CD8-positive, alpha-beta T cell (primary cell): ENCODE measurements at regions of chr19 and their contacts with region 1.

Region 1: GRCh38 chr19:33176670-33177416 is 17.3 kb upstream of the LRP3 start:
- DNase-seq: peak; percentile 91 to 100 (median 97)
- ATAC-seq: peak; percentile 74
- H3K4me3 ChIP-seq: peak overlapping the region; percentile 78 to 89
- H3K4me3 Mint-ChIP-seq: peak overlapping the region; percentile 95
- H3K27ac ChIP-seq: peak overlapping the region; percentile 83
- H3K27ac Mint-ChIP-seq: peak overlapping the region; percentile 98
- H3K4me1 ChIP-seq: peaks cover 16% of the 10 kb centered on the region
- H3K4me1 Mint-ChIP-seq: peaks cover 37% of the 10 kb centered on the region
- H3K27me3 ChIP-seq: no peaks in the 10 kb centered on the region
- H3K27me3 Mint-ChIP-seq: no peaks in the 10 kb centered on the region
- CTCF ChIP-seq: no peak

Region 2: DNA sequence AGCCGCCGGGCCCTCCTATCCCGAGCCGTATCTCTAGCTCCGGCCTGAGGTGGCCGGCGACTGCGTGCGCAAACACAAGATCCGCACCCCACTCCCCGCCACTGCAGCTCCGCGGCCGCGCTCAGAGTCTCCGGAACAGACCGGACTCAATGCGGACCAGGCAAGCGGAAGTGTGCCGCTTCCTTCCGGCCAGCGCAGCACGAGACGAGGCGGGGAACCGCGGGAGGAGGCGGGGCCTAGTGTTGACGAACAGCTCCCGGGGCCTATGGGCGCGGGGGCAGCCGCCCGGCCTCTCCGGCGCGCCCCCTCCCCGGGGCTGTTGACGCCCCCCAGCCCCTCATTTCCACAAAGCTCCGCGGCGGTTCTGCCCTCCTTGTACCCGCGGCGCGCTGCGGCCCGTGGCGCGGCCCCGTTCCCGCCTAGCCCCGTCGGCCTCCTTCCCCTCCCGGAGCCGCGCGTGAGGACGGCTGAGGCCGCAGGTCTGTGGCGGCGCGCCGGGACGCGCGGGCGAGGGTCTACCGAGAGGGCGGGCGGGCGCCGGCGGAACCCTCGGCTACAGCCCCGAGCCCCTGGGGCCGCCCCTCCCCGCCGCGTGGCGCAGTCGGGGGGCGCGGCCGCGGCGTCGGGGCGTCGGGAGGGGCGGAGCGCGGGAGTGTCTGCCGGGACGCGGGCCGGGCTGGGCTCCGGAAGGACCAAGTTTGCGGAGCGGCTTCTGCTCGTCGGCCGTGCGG is 771.2 kb before region 1 on chr19 and contains the start of gene DPY19L3:
- CTCF ChIA-PET with region 1: no interaction called
- POLR2A ChIA-PET with region 1: interaction called, 5 read pairs
- intact Hi-C with region 1: loop called (anchors 2 kb)
- DNase-seq: peak; percentile 73 to 93 (median 89)
- ATAC-seq: peak; percentile 88
- H3K4me3 ChIP-seq: peak within 1 kb of the TSS; percentile 73 to 79
- H3K4me3 Mint-ChIP-seq: peak within 1 kb of the TSS; percentile 90
- H3K27ac ChIP-seq: peak within 1 kb of the TSS; percentile 87 to 91
- H3K27ac Mint-ChIP-seq: peak within 1 kb of the TSS; percentile 92
- H3K4me1 ChIP-seq: peaks cover 14% of the 10 kb centered on the region
- H3K4me1 Mint-ChIP-seq: peaks cover 22% of the 10 kb centered on the region
- H3K27me3 ChIP-seq: no peaks in the 10 kb centered on the region
- H3K27me3 Mint-ChIP-seq: no peaks in the 10 kb centered on the region
- CTCF ChIP-seq: no peak
- total RNA-seq, gene DPY19L3: 7.9 TPM

Region 3: DNA sequence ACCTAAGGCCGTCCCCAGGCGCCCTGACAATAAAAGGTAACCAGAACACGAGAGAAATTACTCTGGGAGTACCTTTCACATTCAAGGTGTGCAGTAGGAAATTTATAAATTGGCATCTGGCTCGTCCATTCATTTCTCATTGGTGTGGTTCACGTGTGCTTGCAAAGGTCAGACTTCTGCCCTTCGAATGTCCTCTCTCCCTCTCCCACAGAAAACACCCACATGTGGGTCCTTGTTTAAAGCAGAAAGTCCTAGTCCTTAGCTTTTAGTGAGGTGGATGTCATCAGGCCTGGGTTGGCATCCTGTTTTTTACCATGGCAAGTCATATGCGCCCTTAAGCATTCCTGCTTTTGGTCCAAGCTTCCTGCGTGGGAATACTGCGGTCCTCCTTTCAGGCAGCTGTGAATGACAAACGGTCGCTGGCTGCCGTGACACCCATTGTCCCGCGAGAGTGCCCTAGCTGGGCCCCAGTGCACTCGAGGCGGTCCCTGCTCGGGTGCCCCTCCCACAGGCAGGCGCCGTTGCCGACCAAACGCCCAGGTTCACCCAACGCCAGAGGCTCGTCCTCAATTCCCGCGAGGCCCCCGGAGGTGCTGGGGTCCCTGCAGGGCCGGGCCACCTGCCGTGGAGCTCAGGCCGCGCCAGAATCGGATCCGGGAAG is 485.4 kb before region 1 on chr19 and contains the start of gene NUDT19:
- CTCF ChIA-PET with region 1: no interaction called
- POLR2A ChIA-PET with region 1: no interaction called
- intact Hi-C with region 1: loop called in 1 of 2 experiments (anchors 5 kb)
- DNase-seq: peak; percentile 53 to 85 (median 75)
- ATAC-seq: peak; percentile 79
- H3K4me3 ChIP-seq: peak within 1 kb of the TSS; percentile 60 to 79
- H3K4me3 Mint-ChIP-seq: peak within 1 kb of the TSS; percentile 92
- H3K27ac ChIP-seq: peak within 1 kb of the TSS; percentile 35 to 74
- H3K27ac Mint-ChIP-seq: peak within 1 kb of the TSS; percentile 90
- H3K4me1 ChIP-seq: peaks cover 35% of the 10 kb centered on the region
- H3K4me1 Mint-ChIP-seq: peaks cover 52% of the 10 kb centered on the region
- H3K27me3 ChIP-seq: no peaks in the 10 kb centered on the region
- H3K27me3 Mint-ChIP-seq: no peaks in the 10 kb centered on the region
- CTCF ChIP-seq: no peak
- total RNA-seq, gene NUDT19: 15.3 to 18.0 TPM

Region 4: DNA sequence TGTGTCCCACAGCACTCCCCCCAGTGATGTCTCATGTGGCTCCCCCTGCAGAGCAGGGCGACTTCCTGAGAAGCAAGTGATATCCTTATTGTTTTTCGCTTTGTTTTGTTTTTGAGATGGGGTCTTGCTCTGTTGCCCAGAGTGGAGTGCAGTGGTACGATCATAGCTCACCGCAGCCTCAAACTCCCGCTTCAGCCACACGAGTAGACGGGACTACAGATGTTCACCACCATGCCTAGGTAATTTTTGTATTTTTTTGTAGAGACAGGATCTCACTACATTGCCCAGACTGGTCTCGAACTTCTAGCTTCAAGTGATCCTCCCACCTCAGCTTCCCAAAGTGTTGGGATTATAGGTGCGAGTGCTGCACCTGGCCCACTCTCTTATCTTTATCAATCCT is 210.1 kb before region 1 on chr19:
- CTCF ChIA-PET with region 1: no interaction called
- POLR2A ChIA-PET with region 1: no interaction called
- intact Hi-C with region 1: no loop called
- DNase-seq: no peak
- ATAC-seq: no peak
- H3K4me3 ChIP-seq: no peak overlapping the region
- H3K4me3 Mint-ChIP-seq: no peak overlapping the region
- H3K27ac ChIP-seq: no peak overlapping the region
- H3K27ac Mint-ChIP-seq: no peak overlapping the region
- H3K4me1 ChIP-seq: peaks cover 6% of the 10 kb centered on the region
- H3K4me1 Mint-ChIP-seq: peaks cover 12% of the 10 kb centered on the region
- H3K27me3 ChIP-seq: no peaks in the 10 kb centered on the region
- H3K27me3 Mint-ChIP-seq: no peaks in the 10 kb centered on the region
- CTCF ChIP-seq: no peak

Region 5: GRCh38 chr19:33125929-33126388 is 50.9 kb before region 1 on chr19:
- CTCF ChIA-PET with region 1: interaction called, 5 read pairs
- POLR2A ChIA-PET with region 1: no interaction called
- intact Hi-C with region 1: loop called in 1 of 2 experiments (anchors 5 kb)
- DNase-seq: peak; percentile 9 to 79 (median 57)
- ATAC-seq: peak; percentile 97
- H3K4me3 ChIP-seq: no peak overlapping the region
- H3K4me3 Mint-ChIP-seq: no peak overlapping the region
- H3K27ac ChIP-seq: no peak overlapping the region
- H3K27ac Mint-ChIP-seq: no peak overlapping the region
- H3K4me1 ChIP-seq: no peaks in the 10 kb centered on the region
- H3K4me1 Mint-ChIP-seq: peaks cover 6% of the 10 kb centered on the region
- H3K27me3 ChIP-seq: no peaks in the 10 kb centered on the region
- H3K27me3 Mint-ChIP-seq: no peaks in the 10 kb centered on the region
- CTCF ChIP-seq: peak; percentile 71

Region 6: DNA sequence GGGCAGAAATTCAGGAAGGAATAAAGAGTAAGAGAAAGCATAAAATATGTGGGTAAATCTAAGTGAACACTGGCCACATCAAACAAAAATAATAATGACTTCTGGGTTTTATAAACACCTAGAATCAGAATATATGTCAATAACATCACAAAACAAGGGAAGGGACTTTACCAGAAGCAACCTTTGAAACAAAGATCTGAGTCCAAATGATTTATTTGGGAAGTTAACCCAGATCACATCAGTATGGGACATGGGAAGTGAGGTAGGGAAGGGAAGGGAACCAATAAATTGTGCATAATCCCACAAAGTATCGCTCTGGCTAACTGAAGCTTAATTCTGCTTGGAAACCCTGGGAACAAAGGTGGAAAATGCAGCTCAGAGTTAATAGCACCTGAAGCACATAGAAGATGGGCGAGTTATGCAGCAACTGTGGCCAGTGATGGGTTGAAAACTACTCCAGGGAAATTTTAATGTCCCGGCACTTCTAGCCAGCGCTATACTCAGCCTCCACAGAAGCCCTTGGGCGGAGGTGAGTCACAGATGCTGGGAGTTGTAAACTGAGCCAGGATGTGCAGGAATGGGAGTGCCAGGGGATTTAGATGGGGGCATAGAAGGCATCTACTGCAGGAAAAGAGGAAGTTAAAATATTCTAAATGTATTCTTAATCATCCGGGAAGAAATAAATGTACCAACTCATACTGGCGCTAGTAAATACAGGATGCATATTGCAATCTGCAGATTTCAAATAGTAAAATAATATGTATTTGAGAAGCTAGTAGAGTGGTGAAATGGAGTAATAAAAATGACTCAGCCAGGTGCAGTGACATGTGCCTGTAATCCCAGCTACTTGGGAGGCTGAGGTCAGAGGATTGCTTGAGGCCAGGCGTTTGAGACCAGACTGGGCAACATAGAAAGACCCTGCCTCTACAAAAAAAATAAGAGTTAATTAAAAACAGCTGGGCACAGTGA is 162.5 kb after region 1 on chr19:
- CTCF ChIA-PET with region 1: no interaction called
- POLR2A ChIA-PET with region 1: no interaction called
- intact Hi-C with region 1: no loop called
- DNase-seq: no peak
- ATAC-seq: no peak
- H3K4me3 ChIP-seq: no peak overlapping the region
- H3K4me3 Mint-ChIP-seq: no peak overlapping the region
- H3K27ac ChIP-seq: no peak overlapping the region
- H3K27ac Mint-ChIP-seq: no peak overlapping the region
- H3K4me1 ChIP-seq: no peaks in the 10 kb centered on the region
- H3K4me1 Mint-ChIP-seq: no peaks in the 10 kb centered on the region
- H3K27me3 ChIP-seq: peaks cover 0 to 5% of the 10 kb centered on the region in 2 experiments
- H3K27me3 Mint-ChIP-seq: peaks cover 14% of the 10 kb centered on the region
- CTCF ChIP-seq: no peak

Region 7: GRCh38 chr19:33373701-33374421 is 197.0 kb after region 1 on chr19 and contains the start of gene CEBPG:
- CTCF ChIA-PET with region 1: no interaction called
- POLR2A ChIA-PET with region 1: interaction called, 14 read pairs
- intact Hi-C with region 1: loop called (anchors 1 kb)
- DNase-seq: peak in 8 of 9 experiments; percentile 21 to 86 (median 56)
- ATAC-seq: peak; percentile 37
- H3K4me3 ChIP-seq: peak within 1 kb of the TSS; percentile 90 to 91
- H3K4me3 Mint-ChIP-seq: peak within 1 kb of the TSS; percentile 84
- H3K27ac ChIP-seq: peak within 1 kb of the TSS; percentile 77 to 86
- H3K27ac Mint-ChIP-seq: peak within 1 kb of the TSS; percentile 88
- H3K4me1 ChIP-seq: peaks cover 15% of the 10 kb centered on the region
- H3K4me1 Mint-ChIP-seq: peaks cover 46% of the 10 kb centered on the region
- H3K27me3 ChIP-seq: no peaks in the 10 kb centered on the region
- H3K27me3 Mint-ChIP-seq: no peaks in the 10 kb centered on the region
- CTCF ChIP-seq: no peak
- total RNA-seq, gene CEBPG: 14.4 to 17.2 TPM

Region 8: DNA sequence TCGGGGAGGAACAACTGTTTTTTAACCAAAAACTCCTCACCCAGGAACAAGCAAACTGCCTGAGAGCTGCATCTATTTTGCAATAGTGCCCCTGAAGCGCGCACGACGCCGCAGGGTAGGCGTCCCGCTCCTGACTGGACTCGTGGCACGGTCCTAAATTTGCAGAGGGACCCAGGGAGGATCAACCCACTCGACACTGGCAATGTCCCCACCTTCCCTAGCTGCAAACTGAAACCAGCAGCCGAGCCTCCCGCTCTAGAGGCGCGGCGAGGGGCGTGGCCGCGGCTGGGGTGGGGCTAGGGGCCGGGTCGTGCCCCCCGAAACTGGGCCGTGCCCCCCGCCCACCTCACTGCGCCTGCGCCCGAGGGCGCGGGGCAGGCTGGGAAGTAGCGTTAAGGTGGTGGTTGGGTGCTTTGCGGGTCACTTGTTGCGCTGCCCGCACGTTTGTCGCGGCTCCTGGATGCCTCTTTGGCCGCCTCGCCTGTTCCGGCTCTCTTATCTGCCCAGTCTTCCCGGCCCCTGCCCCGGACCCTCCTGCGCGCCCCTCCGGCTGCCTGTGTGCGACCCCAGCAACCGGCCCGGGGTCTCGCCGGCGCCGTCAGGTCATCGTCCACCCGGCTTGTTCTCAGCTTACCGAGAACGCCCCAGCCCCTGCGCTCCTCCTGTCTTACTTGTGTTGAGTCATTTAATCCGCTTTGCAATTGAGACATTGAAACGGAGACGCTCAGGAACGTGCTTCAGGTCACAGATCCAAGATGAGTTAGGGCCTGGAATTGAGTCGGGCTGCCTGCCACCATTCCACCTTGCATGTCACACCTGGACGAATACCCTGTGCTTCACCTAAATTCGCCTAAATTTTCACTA is 957.6 kb after region 1 on chr19:
- CTCF ChIA-PET with region 1: no interaction called
- POLR2A ChIA-PET with region 1: no interaction called
- intact Hi-C with region 1: loop called in 1 of 2 experiments (anchors 10 kb)
- DNase-seq: peak; percentile 80 to 97 (median 92)
- ATAC-seq: peak; percentile 99
- H3K4me3 ChIP-seq: peak overlapping the region; percentile 80 to 89
- H3K4me3 Mint-ChIP-seq: peak overlapping the region; percentile 90
- H3K27ac ChIP-seq: peak overlapping the region; percentile 72 to 81
- H3K27ac Mint-ChIP-seq: peak overlapping the region; percentile 90
- H3K4me1 ChIP-seq: peaks cover 7% of the 10 kb centered on the region
- H3K4me1 Mint-ChIP-seq: peaks cover 11% of the 10 kb centered on the region
- H3K27me3 ChIP-seq: no peaks in the 10 kb centered on the region
- H3K27me3 Mint-ChIP-seq: no peaks in the 10 kb centered on the region
- CTCF ChIP-seq: no peak